Ascending aorta (tissue), 2 donors: ENCODE measurements at regions of chr7 and their contacts with region 1.

Region 1: DNA sequence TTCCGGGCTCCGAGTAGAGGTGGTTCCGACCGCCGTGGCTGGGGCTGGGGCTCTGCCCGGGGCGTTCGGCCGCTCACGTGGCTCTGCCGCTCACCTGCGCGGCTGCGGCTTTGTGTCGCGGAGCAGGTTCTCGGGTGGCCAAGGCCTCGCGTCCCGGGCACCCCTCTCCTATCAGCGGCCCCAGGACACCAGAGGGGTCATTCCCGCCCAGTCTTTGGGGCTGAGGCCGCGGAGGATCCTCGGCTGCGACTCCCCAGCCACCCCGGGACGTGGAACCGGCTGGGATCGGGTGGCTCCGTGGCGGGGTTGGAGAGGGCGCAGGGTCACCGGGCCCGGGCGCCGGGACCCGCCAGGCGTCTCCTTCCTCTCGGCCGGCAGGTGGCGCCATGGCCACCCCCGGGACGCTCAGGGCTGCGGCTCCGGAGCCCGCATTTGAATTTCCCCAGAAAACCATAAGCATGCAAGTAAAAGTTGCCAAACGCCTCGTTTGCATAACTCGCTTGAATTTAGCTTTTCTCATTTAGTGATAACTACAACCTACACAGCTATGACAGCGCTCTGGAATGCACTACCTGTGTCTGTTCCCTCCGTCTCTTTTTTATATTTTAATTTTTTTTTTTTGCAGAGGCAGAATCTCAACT is 1.2 kb downstream of the COL26A1 start:
- DNase-seq: peak in 1 of 2 donors; percentile 74
- H3K4me3 ChIP-seq: peak overlapping the region; percentile 61 to 62
- H3K27ac ChIP-seq: no peak overlapping the region
- H3K4me1 ChIP-seq: peaks cover 3 to 17% of the 10 kb centered on the region in 2 donors
- H3K27me3 ChIP-seq: no peaks in the 10 kb centered on the region
- CTCF ChIP-seq: peak; percentile 68 to 95 (median 94)

Region 2: GRCh38 chr7:101644879-101645278 is 281.0 kb after region 1 on chr7:
- intact Hi-C with region 1: no loop called
- DNase-seq: no peak
- H3K4me3 ChIP-seq: peak overlapping the region; percentile 6 to 35
- H3K27ac ChIP-seq: no peak overlapping the region
- H3K4me1 ChIP-seq: no peaks in the 10 kb centered on the region
- H3K27me3 ChIP-seq: no peaks in the 10 kb centered on the region
- CTCF ChIP-seq: no peak

Region 3: DNA sequence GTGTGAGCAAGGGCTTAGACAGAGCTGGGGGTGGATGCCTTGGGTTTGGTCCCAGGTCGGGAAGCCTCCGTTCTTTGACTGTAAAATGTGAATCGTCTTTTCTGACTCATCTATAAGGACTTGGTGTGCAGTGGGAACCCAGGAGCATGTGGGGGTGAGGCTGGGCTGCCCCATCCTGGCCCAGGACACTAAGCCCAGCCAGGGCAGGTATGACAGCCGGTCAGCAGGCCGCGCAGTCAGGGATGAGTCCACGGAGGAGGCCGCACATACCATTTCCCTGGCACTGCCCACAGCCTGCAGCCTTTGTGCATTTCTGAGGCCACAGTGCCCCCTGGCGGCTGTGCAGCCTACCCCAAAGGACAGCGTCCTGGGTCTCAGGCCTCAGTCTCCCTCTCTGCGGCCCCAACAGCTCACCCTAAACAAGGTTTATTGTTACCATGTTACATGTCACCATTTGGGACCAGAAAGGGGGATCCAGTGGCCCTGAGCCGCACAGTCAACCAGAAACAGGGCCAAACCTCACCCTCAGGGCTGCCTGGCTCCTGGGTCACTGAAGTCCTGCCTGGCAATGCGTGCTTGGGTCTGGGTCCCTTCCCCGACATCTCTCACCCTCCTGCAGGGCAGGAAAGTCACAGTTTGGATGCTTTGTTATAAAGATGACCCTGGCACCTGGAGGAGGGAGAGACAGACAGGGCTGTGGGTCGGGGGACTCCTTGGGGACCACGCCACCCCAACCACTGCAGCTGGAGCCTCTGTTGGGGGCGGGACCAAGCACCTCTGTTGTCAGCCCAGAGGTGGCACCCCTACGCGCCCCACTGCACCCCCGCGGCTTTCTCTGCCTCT is 908.4 kb after region 1 on chr7:
- intact Hi-C with region 1: loop called (anchors 5 kb)
- DNase-seq: peak in 1 of 2 donors; percentile 83
- H3K4me3 ChIP-seq: no peak overlapping the region
- H3K27ac ChIP-seq: no peak overlapping the region
- H3K4me1 ChIP-seq: no peaks in the 10 kb centered on the region
- H3K27me3 ChIP-seq: no peaks in the 10 kb centered on the region
- CTCF ChIP-seq: peak; percentile 85 to 93 (median 85)